ENCODE measurements at regions of chr11 and their contacts with region 1.

Region 1: DNA sequence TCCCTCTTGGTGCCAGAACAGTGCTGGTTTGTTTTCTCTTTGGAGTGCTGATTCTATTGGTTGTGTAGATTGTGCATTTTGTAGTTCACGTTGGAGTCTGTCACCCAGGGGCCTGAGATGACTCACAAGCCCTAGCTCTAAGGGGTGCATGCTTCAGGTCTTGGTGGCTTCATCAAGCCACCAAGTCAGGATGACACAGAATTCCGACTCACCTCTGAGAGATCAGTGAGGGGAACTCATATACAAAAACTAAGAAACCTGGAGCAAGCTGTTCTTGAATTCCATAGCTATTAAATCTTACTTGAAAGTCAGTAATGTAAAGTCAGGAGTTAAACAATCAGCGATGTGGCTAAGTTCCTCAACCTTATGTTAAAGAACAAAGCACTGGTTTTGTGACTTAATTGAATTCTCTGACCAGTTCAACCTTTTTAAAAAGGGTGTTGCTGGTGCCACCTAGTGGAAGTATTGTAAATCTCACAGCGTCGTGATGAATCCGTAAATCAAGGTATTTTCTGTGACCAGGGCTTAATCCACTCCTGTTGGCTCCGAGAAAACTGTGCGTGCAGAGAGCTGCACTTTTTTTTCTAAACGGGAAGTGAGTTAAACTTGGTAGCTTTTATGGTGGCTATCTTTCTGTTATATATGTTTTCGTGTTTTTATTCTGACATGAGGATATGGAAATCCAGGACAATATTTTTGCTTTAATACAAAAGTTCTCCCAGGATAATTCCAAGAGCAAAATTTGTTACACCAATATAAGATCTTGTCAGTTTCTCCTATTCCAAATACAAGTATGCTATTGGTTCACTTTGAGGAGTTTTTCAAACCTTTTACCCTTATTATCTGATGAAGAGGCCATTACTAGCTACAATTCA is 14.6 kb downstream of the MMP13 start:
- DNase-seq: peak; percentile 72

Region 2: GRCh38 chr11:102914238-102915043 is 26.5 kb before region 1 on chr11:
- CTCF ChIA-PET with region 1: interaction called, 14 read pairs
- POLR2A ChIA-PET with region 1: no interaction called
- DNase-seq: peak; percentile 50

Measured in HEK293T (cell line).